ENCODE measurements at regions of chr5 and their contacts with region 1.

Region 1: GRCh38 chr5:96826071-96826470 is 18.3 kb upstream of the ERAP1 start:
- DNase-seq: no peak
- ATAC-seq: no peak
- H3K4me3 Mint-ChIP-seq: no peak overlapping the region
- H3K27ac Mint-ChIP-seq: no peak overlapping the region
- H3K4me1 Mint-ChIP-seq: peaks cover 22% of the 10 kb centered on the region
- H3K27me3 Mint-ChIP-seq: no peaks in the 10 kb centered on the region

Region 2: DNA sequence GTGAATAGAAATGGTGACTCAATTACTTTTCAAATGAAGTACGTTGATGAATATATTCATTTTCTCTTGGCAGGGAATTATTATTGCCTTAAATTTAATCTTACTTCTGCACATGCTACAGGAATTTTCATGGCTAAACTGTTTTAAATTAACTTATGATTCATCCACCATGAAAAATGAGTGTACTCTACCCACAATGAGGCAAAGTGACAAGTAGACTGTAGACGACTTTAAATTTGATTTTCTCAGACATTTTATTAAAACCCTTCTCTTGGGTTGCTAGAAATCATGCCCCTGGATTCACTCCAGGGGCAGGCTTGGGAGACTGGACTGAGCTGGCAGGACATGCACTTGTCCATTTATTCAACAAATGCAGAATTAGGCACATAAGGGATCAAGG is 26.7 kb after region 1 on chr5:
- CTCF ChIA-PET with region 1: interaction called, 3 read pairs
- POLR2A ChIA-PET with region 1: no interaction called
- intact Hi-C with region 1: loop called in 1 of 2 experiments (anchors 2 kb)
- DNase-seq: no peak
- ATAC-seq: no peak
- H3K4me3 Mint-ChIP-seq: no peak overlapping the region
- H3K27ac Mint-ChIP-seq: no peak overlapping the region
- H3K4me1 Mint-ChIP-seq: no peaks in the 10 kb centered on the region
- H3K27me3 Mint-ChIP-seq: peaks cover 2% of the 10 kb centered on the region